ENCODE measurements at regions of chr6 and their contacts with region 1.

Region 1: DNA sequence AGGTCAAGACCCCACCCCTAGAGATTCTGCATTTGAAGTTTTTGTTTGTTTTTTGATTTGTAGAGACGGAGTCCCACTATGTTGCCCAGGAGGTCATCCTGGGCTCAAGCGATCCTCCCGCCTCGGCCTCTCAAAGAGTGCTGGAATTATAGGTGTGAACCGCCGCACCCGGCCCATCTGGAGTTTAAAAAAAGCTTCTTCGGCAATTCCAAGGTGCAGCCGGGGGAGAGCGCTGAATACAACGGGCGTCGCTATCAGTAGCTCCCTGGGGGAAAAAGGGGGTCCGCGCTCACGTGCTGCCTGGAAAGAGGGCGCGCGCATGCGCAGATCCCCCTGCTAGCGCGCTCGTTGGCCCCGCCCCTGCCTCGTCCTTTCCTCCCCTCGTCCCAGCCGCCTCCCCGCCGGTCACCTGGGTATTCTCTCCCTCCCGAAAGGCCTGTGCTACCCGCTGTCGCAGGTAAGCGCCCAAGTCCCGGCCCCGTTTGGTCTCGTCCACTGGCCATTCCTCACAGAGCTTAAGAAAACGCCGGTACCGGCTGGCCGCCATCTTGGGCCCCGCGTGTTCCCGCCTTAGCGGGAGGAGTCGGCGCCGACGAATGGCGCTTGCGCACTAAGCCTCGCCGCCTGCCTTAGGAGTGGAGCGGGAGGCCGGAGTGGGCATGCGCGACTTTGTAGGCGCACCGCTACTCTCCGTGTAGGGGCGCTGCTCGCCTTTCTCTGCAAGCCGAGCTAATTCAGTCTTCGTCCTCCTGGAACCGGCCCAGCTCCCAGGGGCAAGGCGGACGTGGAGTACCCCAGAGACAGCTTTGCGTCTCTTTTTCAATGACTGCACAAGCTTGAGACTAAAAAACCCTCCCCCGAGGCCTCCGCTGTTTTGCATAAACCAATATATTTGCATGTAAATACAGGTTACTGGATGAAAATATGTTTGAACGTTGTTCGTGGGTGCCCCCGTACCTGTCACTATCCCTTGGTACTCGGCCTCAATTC is at the start of gene UQCC2:
- DNase-seq: peak; percentile 94
- total RNA-seq, gene UQCC2: 41.7 and 68.5 TPM in 2 replicates

Region 2: GRCh38 chr6:33467091-33467490 is 244.3 kb before region 1 on chr6:
- in situ Hi-C with region 1: no loop called
- DNase-seq: no peak

Region 3: GRCh38 chr6:33654831-33655554 is 56.4 kb before region 1 on chr6:
- in situ Hi-C with region 1: loop called (anchors 10 kb)
- DNase-seq: no peak

Measured in Caki2 (cell line).